Heart right ventricle (tissue), 16 donors: ENCODE measurements at regions of chr7 and their contacts with region 1.

Region 1: GRCh38 chr7:29189743-29190201 is 4.8 kb upstream of the CHN2 start:
- DNase-seq: peak; percentile 55 to 59
- ATAC-seq: peak in 7 of 8 donors; percentile 38 to 84 (median 66)
- H3K4me3 ChIP-seq: no peak overlapping the region
- H3K27ac ChIP-seq: no peak overlapping the region
- H3K4me1 ChIP-seq: peaks cover 0 to 24% (median 4%) of the 10 kb centered on the region in 9 donors
- H3K27me3 ChIP-seq: peaks cover 0 to 29% (median 4%) of the 10 kb centered on the region in 7 donors
- CTCF ChIP-seq: peak; percentile 68 to 84 (median 80)

Region 2: GRCh38 chr7:28926871-28927597 is 262.7 kb before region 1 on chr7:
- intact Hi-C with region 1: loop called in 5 of 10 experiments (anchors 5 to 10 kb)
- DNase-seq: peak; percentile 66 to 86
- ATAC-seq: peak; percentile 82 to 96 (median 94)
- H3K4me3 ChIP-seq: peak overlapping the region; percentile 24 to 65 (median 52)
- H3K27ac ChIP-seq: peak overlapping the region in 9 of 10 donors; percentile 11 to 69 (median 45)
- H3K4me1 ChIP-seq: peaks cover 0 to 24% (median 18%) of the 10 kb centered on the region in 9 donors
- H3K27me3 ChIP-seq: peaks cover 0 to 6% (median 0%) of the 10 kb centered on the region in 7 donors
- CTCF ChIP-seq: peak; percentile 73 to 91 (median 84)

Region 3: DNA sequence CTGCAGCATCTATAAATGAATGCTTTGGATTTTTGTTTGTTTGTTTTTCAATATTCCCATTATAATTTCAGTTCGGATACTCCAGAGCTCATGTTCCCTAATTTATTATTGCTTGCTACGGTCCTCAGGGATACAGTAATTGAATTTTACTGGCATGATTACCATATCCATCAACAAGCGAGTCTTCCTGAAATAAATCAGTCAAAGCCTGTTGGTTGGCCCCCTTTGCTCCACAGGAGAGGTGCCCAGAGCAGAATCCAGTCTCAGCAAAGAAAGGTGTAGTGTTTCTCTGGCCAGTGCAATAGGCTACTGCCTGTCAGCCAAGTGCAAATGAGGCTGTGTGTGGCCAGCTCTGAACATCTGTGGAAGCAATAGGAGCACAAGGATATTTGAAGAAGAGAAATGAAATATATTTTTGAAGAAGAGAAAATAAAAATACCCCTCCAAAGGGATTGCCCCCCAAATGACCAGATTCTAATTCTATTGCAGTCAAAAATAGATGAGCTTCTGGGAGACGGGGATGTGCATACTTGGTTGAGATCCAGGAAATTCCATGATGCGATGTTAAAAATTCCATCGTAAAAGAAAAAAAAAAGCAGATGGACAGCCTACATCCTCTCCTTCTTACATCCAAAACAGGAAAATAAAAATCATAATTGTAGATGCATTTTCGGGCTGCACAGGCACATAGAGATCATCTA is 249.8 kb before region 1 on chr7:
- intact Hi-C with region 1: loop called in 1 of 10 experiments (anchors 10 kb)
- DNase-seq: no peak
- ATAC-seq: peak in 3 of 8 donors; percentile 29 to 50 (median 43)
- H3K4me3 ChIP-seq: no peak overlapping the region
- H3K27ac ChIP-seq: peak overlapping the region in 3 of 10 donors; percentile 21 to 53 (median 50)
- H3K4me1 ChIP-seq: peaks cover 0 to 40% (median 10%) of the 10 kb centered on the region in 9 donors
- H3K27me3 ChIP-seq: peaks cover 0 to 4% (median 0%) of the 10 kb centered on the region in 7 donors
- CTCF ChIP-seq: no peak

Region 4: DNA sequence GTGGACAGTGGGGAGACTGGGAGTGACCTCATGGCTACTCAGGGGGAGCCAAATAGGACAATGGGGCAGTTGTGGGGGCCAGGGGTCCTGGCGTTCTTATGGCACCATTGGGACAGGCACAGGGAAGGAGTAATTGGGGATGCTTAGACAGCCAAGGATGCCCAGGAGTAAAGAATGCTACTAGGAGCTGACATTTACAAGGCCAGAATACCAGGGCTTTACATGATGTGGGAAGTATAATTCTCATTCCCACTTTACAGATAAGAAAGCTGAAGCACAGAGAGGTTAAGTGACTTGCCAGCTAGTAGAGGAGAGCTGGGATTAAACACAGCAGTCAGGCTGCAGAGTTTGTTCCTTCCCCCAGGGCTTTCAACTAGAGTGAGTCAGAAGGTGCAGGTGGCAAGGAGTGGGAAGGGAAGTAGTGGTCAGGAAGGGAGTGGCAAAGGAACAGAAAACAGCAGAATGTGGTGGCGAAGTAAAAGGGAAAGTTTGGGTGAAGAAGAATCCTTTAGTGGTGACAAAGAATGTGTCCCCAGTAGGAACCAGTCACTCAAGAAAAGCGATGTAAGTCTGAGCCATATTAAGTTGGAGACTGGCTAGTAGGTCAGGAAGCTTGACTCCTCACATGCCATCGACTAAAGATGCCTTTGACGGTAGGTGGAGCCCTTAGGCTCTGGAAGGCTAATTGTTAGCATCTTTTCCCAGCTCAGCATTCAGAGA is 76.2 kb before region 1 on chr7:
- intact Hi-C with region 1: loop called in 1 of 10 experiments (anchors 10 kb)
- DNase-seq: no peak
- ATAC-seq: peak in 4 of 8 donors; percentile 24 to 59 (median 34)
- H3K4me3 ChIP-seq: no peak overlapping the region
- H3K27ac ChIP-seq: no peak overlapping the region
- H3K4me1 ChIP-seq: peaks cover 0 to 57% (median 15%) of the 10 kb centered on the region in 9 donors
- H3K27me3 ChIP-seq: peaks cover 0 to 3% (median 0%) of the 10 kb centered on the region in 7 donors
- CTCF ChIP-seq: peak in 7 of 9 donors; percentile 7 to 49 (median 37)

Region 5: DNA sequence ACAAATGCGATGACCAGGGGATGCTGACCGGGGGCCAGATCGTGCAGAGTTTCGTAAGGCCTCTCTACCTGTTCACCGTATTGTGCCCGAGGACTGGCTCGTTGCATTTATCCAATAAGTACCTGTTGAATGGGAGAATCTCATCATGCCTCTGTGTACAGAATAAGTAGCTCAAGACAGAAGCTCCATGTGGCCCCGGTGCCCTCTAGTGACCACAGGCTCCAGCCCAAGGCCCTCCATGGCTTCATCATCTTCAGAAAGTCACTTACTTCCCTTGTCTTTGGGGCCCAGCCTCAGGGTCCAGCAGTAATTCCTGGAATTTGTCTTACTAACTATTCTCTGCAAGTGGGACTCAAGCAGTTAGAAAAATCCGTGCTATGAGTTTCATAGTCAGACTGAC is 155.8 kb after region 1 on chr7:
- intact Hi-C with region 1: loop called in 8 of 10 experiments (anchors 2 to 10 kb)
- DNase-seq: peak; percentile 38 to 41
- ATAC-seq: peak in 7 of 8 donors; percentile 56 to 72 (median 67)
- H3K4me3 ChIP-seq: no peak overlapping the region
- H3K27ac ChIP-seq: no peak overlapping the region
- H3K4me1 ChIP-seq: peaks cover 0 to 25% (median 0%) of the 10 kb centered on the region in 9 donors
- H3K27me3 ChIP-seq: no peaks in the 10 kb centered on the region
- CTCF ChIP-seq: peak; percentile 5 to 71 (median 60)

Region 6: DNA sequence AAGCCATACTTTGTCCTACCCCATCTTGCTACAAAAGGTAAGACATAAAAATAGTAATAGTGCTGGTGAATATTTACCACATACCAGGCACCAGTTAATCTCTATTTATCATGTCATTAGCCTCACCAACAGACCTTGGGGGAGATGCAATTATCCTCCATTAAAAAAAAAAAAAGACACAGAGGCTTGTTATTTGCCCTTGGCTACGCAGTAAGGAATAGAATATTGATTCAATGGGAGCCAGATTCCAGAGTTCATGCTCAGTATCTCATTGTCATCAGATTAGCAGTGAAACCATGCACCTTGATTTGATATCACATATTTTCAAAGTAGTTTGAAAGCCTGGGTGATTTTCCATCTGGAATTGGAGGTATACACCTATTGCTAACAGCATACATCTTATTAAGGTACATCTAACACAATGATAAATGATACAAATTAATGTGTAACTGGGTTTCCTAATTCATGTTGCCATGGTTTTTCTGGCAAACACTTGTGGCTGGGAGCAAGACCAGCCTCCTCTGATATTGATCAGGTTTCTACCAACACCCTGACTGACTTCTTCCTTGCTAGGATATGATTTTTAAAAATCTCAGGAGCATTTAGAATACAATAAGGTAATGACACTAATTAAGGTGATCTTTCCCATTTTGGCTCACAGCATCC is 306.7 kb after region 1 on chr7:
- intact Hi-C with region 1: no loop called
- DNase-seq: no peak
- ATAC-seq: no peak
- H3K4me3 ChIP-seq: no peak overlapping the region
- H3K27ac ChIP-seq: no peak overlapping the region
- H3K4me1 ChIP-seq: peaks cover 0 to 4% (median 0%) of the 10 kb centered on the region in 9 donors
- H3K27me3 ChIP-seq: no peaks in the 10 kb centered on the region
- CTCF ChIP-seq: no peak